T-cell (primary cell): ENCODE measurements at regions of chr1 and their contacts with region 1.

Region 1: GRCh38 chr1:113904674-113905434 is at the starts of genes AP4B1 and DCLRE1B:
- DNase-seq: peak; percentile 84 to 99 (median 96)
- ATAC-seq: peak; percentile 93 to 94 (median 94)
- H3K4me3 ChIP-seq: peak within 1 kb of the TSS; percentile 73 to 95
- H3K4me3 Mint-ChIP-seq: peak within 1 kb of the TSS; percentile 91 to 98 (median 96)
- H3K27ac ChIP-seq: peak within 1 kb of the TSS; percentile 92
- H3K27ac Mint-ChIP-seq: peak within 1 kb of the TSS; percentile 99
- H3K4me1 ChIP-seq: peaks cover 22 to 29% of the 10 kb centered on the region in 2 experiments
- H3K4me1 Mint-ChIP-seq: peaks cover 44 to 68% (median 57%) of the 10 kb centered on the region in 3 donors
- H3K27me3 ChIP-seq: no peaks in the 10 kb centered on the region
- H3K27me3 Mint-ChIP-seq: no peaks in the 10 kb centered on the region
- total RNA-seq, gene AP4B1: 57.8 to 66.4 (median 61.5) TPM
- total RNA-seq, gene DCLRE1B: 5.6 to 6.1 (median 5.9) TPM

Region 2: GRCh38 chr1:113811888-113812660 is 92.8 kb before region 1 on chr1 and contains the start of gene RSBN1:
- CTCF ChIA-PET with region 1: interaction called, 3 to 6 read pairs
- POLR2A ChIA-PET with region 1: interaction called in 1 of 2 experiments, 11 read pairs
- DNase-seq: peak; percentile 94 to 99 (median 98)
- ATAC-seq: peak; percentile 93 to 95 (median 94)
- H3K4me3 ChIP-seq: peak within 1 kb of the TSS; percentile 84 to 92
- H3K4me3 Mint-ChIP-seq: peak within 1 kb of the TSS; percentile 98 to 99 (median 99)
- H3K27ac ChIP-seq: peak within 1 kb of the TSS; percentile 90
- H3K27ac Mint-ChIP-seq: peak within 1 kb of the TSS; percentile 98
- H3K4me1 ChIP-seq: peaks cover 11 to 34% of the 10 kb centered on the region in 2 experiments
- H3K4me1 Mint-ChIP-seq: peaks cover 37 to 43% (median 39%) of the 10 kb centered on the region in 3 donors
- H3K27me3 ChIP-seq: no peaks in the 10 kb centered on the region
- H3K27me3 Mint-ChIP-seq: no peaks in the 10 kb centered on the region
- total RNA-seq, gene RSBN1: 43.9 to 49.9 (median 45.1) TPM

Region 3: DNA sequence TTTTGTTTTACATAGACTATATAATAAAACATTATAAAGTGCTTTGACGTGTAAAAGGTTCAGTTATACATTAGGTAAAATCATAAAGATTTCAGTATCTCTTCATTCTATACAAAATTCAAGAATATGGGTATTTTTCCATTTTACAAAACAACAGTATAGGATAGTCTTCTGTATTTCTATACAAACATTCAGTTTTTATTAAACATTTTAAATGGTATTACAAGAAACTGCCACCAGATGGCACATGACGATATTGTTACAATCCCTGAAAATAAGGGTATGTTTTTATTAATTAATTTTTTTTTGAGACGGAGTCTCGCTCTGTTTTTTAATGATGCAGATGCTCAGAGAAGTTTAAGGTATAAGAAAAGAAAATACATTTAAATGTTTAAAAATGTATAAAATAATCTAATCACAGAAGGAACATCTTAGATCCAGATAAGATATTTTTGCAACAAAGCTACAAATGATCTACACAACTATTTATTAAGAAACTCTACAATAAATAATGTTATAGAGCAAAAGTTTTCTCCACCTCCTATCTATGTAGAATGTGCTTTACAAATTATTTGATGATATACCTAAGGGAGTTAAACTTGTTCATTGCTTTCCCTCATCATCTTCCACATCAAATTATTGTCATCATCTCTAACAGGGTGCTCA is 69.1 kb before region 1 on chr1:
- CTCF ChIA-PET with region 1: interaction called, 4 to 41 read pairs
- POLR2A ChIA-PET with region 1: interaction called, 5 to 8 read pairs
- DNase-seq: peak in 12 of 35 experiments; percentile 7 to 80 (median 23)
- ATAC-seq: no peak
- H3K4me3 ChIP-seq: no peak overlapping the region
- H3K4me3 Mint-ChIP-seq: no peak overlapping the region
- H3K27ac ChIP-seq: no peak overlapping the region
- H3K27ac Mint-ChIP-seq: peak overlapping the region; percentile 31 to 58
- H3K4me1 ChIP-seq: no peaks in the 10 kb centered on the region
- H3K4me1 Mint-ChIP-seq: peaks cover 5 to 7% (median 5%) of the 10 kb centered on the region in 3 donors
- H3K27me3 ChIP-seq: no peaks in the 10 kb centered on the region
- H3K27me3 Mint-ChIP-seq: no peaks in the 10 kb centered on the region

Region 4: DNA sequence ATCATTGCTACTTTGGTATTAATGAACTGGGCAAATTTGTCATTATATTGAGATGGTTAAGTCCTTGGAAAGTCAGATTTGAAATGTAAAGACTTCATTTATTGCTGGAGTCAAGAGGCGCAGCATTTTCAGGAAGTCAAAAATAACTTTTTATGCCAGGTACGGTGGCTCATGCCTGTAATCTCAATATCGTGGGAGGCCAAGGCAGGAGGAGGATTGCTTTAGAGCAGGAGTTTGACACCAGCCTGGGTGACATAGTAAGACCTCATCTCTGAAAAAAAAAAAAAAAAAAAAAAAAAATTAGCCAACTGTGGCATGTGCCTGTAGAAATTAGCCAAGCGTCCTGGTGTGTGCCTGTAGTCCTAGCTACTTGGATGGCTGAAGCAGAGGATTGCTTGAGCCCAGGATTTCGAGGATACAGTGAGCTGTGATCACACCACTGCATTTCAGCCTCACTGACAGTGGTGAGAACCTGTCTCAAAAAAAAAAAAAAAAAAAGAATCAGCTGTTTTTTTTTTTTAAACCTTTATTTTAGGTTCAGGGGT is 29.7 kb after region 1 on chr1:
- CTCF ChIA-PET with region 1: interaction called, 3 to 69 read pairs
- POLR2A ChIA-PET with region 1: interaction called, 22 to 110 read pairs
- DNase-seq: no peak
- ATAC-seq: no peak
- H3K4me3 ChIP-seq: no peak overlapping the region
- H3K4me3 Mint-ChIP-seq: peak overlapping the region; percentile 22 to 91 (median 89)
- H3K27ac ChIP-seq: peak overlapping the region; percentile 95
- H3K27ac Mint-ChIP-seq: peak overlapping the region; percentile 94 to 99
- H3K4me1 ChIP-seq: peaks cover 52 to 64% of the 10 kb centered on the region in 2 experiments
- H3K4me1 Mint-ChIP-seq: peaks cover 88 to 91% (median 89%) of the 10 kb centered on the region in 3 donors
- H3K27me3 ChIP-seq: no peaks in the 10 kb centered on the region
- H3K27me3 Mint-ChIP-seq: no peaks in the 10 kb centered on the region

Region 5: DNA sequence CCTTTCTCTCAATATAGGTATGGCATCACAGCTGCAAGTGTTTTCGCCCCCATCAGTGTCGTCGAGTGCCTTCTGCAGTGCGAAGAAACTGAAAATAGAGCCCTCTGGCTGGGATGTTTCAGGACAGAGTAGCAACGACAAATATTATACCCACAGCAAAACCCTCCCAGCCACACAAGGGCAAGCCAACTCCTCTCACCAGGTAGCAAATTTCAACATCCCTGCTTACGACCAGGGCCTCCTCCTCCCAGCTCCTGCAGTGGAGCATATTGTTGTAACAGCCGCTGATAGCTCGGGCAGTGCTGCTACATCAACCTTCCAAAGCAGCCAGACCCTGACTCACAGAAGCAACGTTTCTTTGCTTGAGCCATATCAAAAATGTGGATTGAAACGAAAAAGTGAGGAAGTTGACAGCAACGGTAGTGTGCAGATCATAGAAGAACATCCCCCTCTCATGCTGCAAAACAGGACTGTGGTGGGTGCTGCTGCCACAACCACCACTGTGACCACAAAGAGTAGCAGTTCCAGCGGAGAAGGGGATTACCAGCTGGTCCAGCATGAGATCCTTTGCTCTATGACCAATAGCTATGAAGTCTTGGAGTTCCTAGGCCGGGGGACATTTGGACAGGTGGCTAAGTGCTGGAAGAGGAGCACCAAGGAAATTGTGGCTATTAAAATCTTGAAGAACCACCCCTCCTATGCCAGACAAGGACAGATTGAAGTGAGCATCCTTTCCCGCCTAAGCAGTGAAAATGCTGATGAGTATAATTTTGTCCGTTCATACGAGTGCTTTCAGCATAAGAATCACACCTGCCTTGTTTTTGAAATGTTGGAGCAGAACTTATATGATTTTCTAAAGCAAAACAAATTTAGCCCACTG is 35.8 kb after region 1 on chr1:
- CTCF ChIA-PET with region 1: interaction called, 3 read pairs
- POLR2A ChIA-PET with region 1: interaction called, 4 to 11 read pairs
- DNase-seq: peak in 30 of 35 experiments; percentile 11 to 73 (median 30)
- ATAC-seq: peak; percentile 64 to 72 (median 65)
- H3K4me3 ChIP-seq: peak overlapping the region in 1 of 2 donors; percentile 53
- H3K4me3 Mint-ChIP-seq: peak overlapping the region; percentile 69 to 90 (median 77)
- H3K27ac ChIP-seq: peak overlapping the region; percentile 68
- H3K27ac Mint-ChIP-seq: peak overlapping the region; percentile 92 to 98
- H3K4me1 ChIP-seq: peaks cover 50 to 52% of the 10 kb centered on the region in 2 experiments
- H3K4me1 Mint-ChIP-seq: peaks cover 80 to 82% (median 81%) of the 10 kb centered on the region in 3 donors
- H3K27me3 ChIP-seq: no peaks in the 10 kb centered on the region
- H3K27me3 Mint-ChIP-seq: no peaks in the 10 kb centered on the region

Region 6: GRCh38 chr1:113963281-113963906 is 58.5 kb after region 1 on chr1:
- CTCF ChIA-PET with region 1: interaction called, 5 to 14 read pairs
- POLR2A ChIA-PET with region 1: interaction called in 1 of 2 experiments, 3 read pairs
- DNase-seq: peak in 1 of 35 experiments; percentile 46
- ATAC-seq: peak in 1 of 4 experiments; percentile 57
- H3K4me3 ChIP-seq: no peak overlapping the region
- H3K4me3 Mint-ChIP-seq: peak overlapping the region in 2 of 3 donors; percentile 23 to 37
- H3K27ac ChIP-seq: no peak overlapping the region
- H3K27ac Mint-ChIP-seq: peak overlapping the region; percentile 63 to 72
- H3K4me1 ChIP-seq: no peaks in the 10 kb centered on the region
- H3K4me1 Mint-ChIP-seq: peaks cover 13 to 23% (median 13%) of the 10 kb centered on the region in 3 donors
- H3K27me3 ChIP-seq: no peaks in the 10 kb centered on the region
- H3K27me3 Mint-ChIP-seq: no peaks in the 10 kb centered on the region